A549 (cell line): ENCODE measurements at regions of chr20 and their contacts with region 1.

Region 1: GRCh38 chr20:49982346-49983122 is at the start of gene SNAI1:
- DNase-seq: peak; percentile 88 to 97
- ATAC-seq: peak; percentile 80 to 81
- H3K4me3 ChIP-seq: peak within 1 kb of the TSS; percentile 69
- H3K27ac ChIP-seq: peak within 1 kb of the TSS; percentile 80 to 95
- H3K4me1 ChIP-seq: peaks cover 57% of the 10 kb centered on the region
- CTCF ChIP-seq: peak; percentile 90
- EP300 ChIP-seq: no peak
- POLR2A ChIP-seq: peak; percentile 99
- RAD21 ChIP-seq: peak; percentile 34 to 79; a peak in 4 of 5 replicates
- polyA plus RNA-seq, gene SNAI1: 7.0 and 7.2 TPM in 2 replicates

Region 2: GRCh38 chr20:49948809-49949548 is 33.6 kb before region 1 on chr20:
- CTCF ChIA-PET with region 1: interaction called, 15 read pairs
- POLR2A ChIA-PET with region 1: no interaction called
- DNase-seq: peak in 1 of 2 experiments; percentile 62
- ATAC-seq: peak; percentile 67 to 87
- H3K4me3 ChIP-seq: no peak overlapping the region
- H3K27ac ChIP-seq: peak overlapping the region; percentile 63 to 83; a peak in 5 of 6 replicates
- H3K4me1 ChIP-seq: peaks cover 28% of the 10 kb centered on the region
- CTCF ChIP-seq: no peak
- EP300 ChIP-seq: no peak
- POLR2A ChIP-seq: no peak
- RAD21 ChIP-seq: no peak

Region 3: DNA sequence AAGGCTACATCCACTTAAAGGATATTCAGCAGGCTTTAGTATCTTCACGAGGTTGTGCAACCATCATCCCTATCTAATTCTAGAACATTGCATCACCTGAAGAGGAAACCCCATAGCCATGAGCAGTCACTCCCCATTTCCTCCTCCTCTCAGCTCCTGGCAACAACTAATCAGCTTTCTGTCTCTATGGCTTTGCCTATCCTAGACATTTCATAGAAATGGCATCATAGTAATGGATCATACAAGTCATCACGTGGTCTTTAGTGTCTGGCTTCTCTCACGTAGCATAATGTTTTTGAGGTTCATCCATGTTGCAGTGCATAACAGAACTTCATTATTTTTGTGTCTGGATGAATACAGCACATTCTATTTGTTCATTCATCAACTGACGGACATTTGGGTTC is 20.7 kb after region 1 on chr20:
- CTCF ChIA-PET with region 1: interaction called, 16 read pairs
- POLR2A ChIA-PET with region 1: interaction called, 3 read pairs
- DNase-seq: peak in 1 of 2 experiments; percentile 42
- ATAC-seq: peak; percentile 39 to 45; a peak in 2 of 6 replicates
- H3K4me3 ChIP-seq: no peak overlapping the region
- H3K27ac ChIP-seq: peak overlapping the region in 1 of 2 experiments; percentile 15; a peak in 1 of 6 replicates
- H3K4me1 ChIP-seq: peaks cover 20% of the 10 kb centered on the region
- CTCF ChIP-seq: no peak
- EP300 ChIP-seq: no peak
- POLR2A ChIP-seq: no peak
- RAD21 ChIP-seq: no peak

Region 4: GRCh38 chr20:50034567-50035208 is 52.2 kb after region 1 on chr20:
- CTCF ChIA-PET with region 1: interaction called, 33 read pairs
- POLR2A ChIA-PET with region 1: interaction called, 3 read pairs
- DNase-seq: peak; percentile 78 to 86
- ATAC-seq: peak; percentile 54 to 71
- H3K4me3 ChIP-seq: no peak overlapping the region
- H3K27ac ChIP-seq: peak overlapping the region; percentile 93 to 95
- H3K4me1 ChIP-seq: peaks cover 62% of the 10 kb centered on the region
- CTCF ChIP-seq: no peak
- EP300 ChIP-seq: no peak
- POLR2A ChIP-seq: no peak
- RAD21 ChIP-seq: no peak

Region 5: GRCh38 chr20:50054626-50055511 is 72.3 kb after region 1 on chr20:
- CTCF ChIA-PET with region 1: interaction called, 1,049 read pairs
- POLR2A ChIA-PET with region 1: interaction called, 11 read pairs
- DNase-seq: no peak
- ATAC-seq: peak in 1 of 2 experiments; percentile 19; a peak in 1 of 6 replicates
- H3K4me3 ChIP-seq: no peak overlapping the region
- H3K27ac ChIP-seq: peak overlapping the region in 1 of 2 experiments; percentile 31; a peak in 1 of 6 replicates
- H3K4me1 ChIP-seq: no peaks in the 10 kb centered on the region
- CTCF ChIP-seq: no peak
- EP300 ChIP-seq: no peak
- POLR2A ChIP-seq: no peak
- RAD21 ChIP-seq: no peak

Region 6: GRCh38 chr20:50085452-50086365 is 103.2 kb after region 1 on chr20:
- CTCF ChIA-PET with region 1: interaction called, 103 read pairs
- POLR2A ChIA-PET with region 1: no interaction called
- DNase-seq: peak; percentile 70 to 81
- ATAC-seq: peak; percentile 87 to 91
- H3K4me3 ChIP-seq: no peak overlapping the region
- H3K27ac ChIP-seq: peak overlapping the region; percentile 19 to 69; a peak in 4 of 6 replicates
- H3K4me1 ChIP-seq: peaks cover 29% of the 10 kb centered on the region
- CTCF ChIP-seq: peak; percentile 92
- EP300 ChIP-seq: no peak
- POLR2A ChIP-seq: no peak
- RAD21 ChIP-seq: peak; percentile 72 to 81

Region 7: GRCh38 chr20:50115591-50116372 is 133.2 kb after region 1 on chr20:
- CTCF ChIA-PET with region 1: interaction called, 18 read pairs
- POLR2A ChIA-PET with region 1: interaction called, 3 read pairs
- DNase-seq: peak; percentile 92 to 96
- ATAC-seq: peak; percentile 82 to 87
- H3K4me3 ChIP-seq: peak overlapping the region; percentile 54
- H3K27ac ChIP-seq: peak overlapping the region; percentile 69 to 84
- H3K4me1 ChIP-seq: peaks cover 31% of the 10 kb centered on the region
- CTCF ChIP-seq: no peak
- EP300 ChIP-seq: no peak
- POLR2A ChIP-seq: peak; percentile 61
- RAD21 ChIP-seq: no peak